Activated B cell treated with CpG ODN at 0.5 μM for 24 hours (primary cell): ENCODE measurements at regions of chr17 and their contacts with region 1.

Region 1: GRCh38 chr17:75632863-75633485 is at the start of gene SMIM5:
- DNase-seq: peak; percentile 83
- ATAC-seq: peak; percentile 89
- H3K4me3 Mint-ChIP-seq: peak within 1 kb of the TSS; percentile 11
- H3K27ac Mint-ChIP-seq: no peak within 1 kb of the TSS
- H3K4me1 Mint-ChIP-seq: peaks cover 13% of the 10 kb centered on the region
- H3K27me3 Mint-ChIP-seq: no peaks in the 10 kb centered on the region
- CTCF ChIP-seq: no peak
- total RNA-seq, gene SMIM5: 1.1 and 1.7 TPM in 2 replicates

Region 2: DNA sequence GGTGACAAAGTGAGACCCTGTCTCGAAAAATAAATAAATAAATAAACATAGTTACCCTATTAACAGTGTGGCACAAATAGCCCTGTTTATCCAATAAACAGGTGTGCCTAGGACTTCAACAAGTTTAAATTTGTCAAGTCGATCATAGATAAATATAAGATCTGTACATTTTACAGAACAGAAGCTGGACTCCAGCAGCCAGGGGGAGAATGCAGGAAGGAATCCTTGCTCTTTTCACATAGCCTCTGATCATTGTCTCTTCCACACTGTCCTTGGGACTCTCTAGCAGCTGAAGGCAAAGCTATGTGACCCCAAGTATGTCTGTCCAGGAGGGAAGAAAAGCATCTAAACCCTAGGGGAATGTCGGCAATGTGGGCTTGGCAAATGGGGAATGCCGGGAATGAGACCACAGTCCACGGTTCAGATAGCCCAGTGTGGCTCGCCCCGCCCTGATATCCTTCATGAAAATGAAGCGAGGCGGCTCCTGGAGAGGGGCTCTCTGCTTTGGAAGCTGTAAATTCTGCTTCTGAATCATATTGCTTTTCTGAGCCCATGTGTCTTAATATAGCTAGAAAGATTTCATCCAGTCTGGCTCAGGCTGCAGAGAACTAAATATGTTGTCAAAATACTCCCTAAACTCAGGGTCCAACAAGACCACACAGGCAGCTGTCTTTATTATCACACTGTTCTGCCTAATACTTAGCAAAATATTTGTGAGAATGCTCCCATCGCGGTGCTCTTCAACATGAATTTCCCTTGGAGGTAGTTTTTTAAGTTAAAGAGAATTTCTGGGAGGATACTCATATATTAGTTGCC is 202.6 kb before region 1 on chr17:
- CTCF ChIA-PET with region 1: interaction called, 8 read pairs
- POLR2A ChIA-PET with region 1: no interaction called
- intact Hi-C with region 1: loop called (anchors 1 kb)
- DNase-seq: no peak
- ATAC-seq: no peak
- H3K4me3 Mint-ChIP-seq: no peak overlapping the region
- H3K27ac Mint-ChIP-seq: no peak overlapping the region
- H3K4me1 Mint-ChIP-seq: peaks cover 10% of the 10 kb centered on the region
- H3K27me3 Mint-ChIP-seq: peaks cover 9% of the 10 kb centered on the region
- CTCF ChIP-seq: no peak

Region 3: GRCh38 chr17:75645889-75646637 is 13.1 kb after region 1 on chr17:
- CTCF ChIA-PET with region 1: interaction called, 72 read pairs
- POLR2A ChIA-PET with region 1: interaction called, 10 read pairs
- intact Hi-C with region 1: no loop called
- DNase-seq: peak; percentile 45
- ATAC-seq: peak; percentile 98
- H3K4me3 Mint-ChIP-seq: peak overlapping the region; percentile 69
- H3K27ac Mint-ChIP-seq: peak overlapping the region; percentile 84
- H3K4me1 Mint-ChIP-seq: peaks cover 15% of the 10 kb centered on the region
- H3K27me3 Mint-ChIP-seq: no peaks in the 10 kb centered on the region
- CTCF ChIP-seq: no peak

Region 4: DNA sequence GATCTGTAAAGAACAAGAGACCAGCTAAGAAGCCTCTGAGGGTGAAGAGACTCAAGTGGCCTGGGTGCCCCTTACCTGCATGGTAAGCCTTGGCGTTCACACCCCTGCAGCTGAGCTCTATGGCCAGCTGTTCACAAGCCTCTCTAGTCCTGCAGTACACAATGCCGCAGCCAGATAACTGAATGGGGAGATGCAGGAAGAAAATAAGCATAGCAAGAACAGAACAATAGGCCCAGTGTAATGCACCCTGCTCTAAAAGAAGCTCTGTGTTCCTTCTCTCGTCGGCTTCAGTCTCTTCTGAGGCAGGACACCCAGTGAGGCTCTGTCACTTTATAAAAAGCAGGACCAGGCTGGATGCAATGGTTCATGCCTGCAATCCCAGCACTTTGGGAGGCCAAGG is 28.6 kb after region 1 on chr17:
- CTCF ChIA-PET with region 1: interaction called, 72 read pairs
- POLR2A ChIA-PET with region 1: interaction called, 9 read pairs
- intact Hi-C with region 1: no loop called
- DNase-seq: no peak
- ATAC-seq: no peak
- H3K4me3 Mint-ChIP-seq: no peak overlapping the region
- H3K27ac Mint-ChIP-seq: peak overlapping the region; percentile 63
- H3K4me1 Mint-ChIP-seq: peaks cover 40% of the 10 kb centered on the region
- H3K27me3 Mint-ChIP-seq: no peaks in the 10 kb centered on the region
- CTCF ChIP-seq: no peak

Region 5: DNA sequence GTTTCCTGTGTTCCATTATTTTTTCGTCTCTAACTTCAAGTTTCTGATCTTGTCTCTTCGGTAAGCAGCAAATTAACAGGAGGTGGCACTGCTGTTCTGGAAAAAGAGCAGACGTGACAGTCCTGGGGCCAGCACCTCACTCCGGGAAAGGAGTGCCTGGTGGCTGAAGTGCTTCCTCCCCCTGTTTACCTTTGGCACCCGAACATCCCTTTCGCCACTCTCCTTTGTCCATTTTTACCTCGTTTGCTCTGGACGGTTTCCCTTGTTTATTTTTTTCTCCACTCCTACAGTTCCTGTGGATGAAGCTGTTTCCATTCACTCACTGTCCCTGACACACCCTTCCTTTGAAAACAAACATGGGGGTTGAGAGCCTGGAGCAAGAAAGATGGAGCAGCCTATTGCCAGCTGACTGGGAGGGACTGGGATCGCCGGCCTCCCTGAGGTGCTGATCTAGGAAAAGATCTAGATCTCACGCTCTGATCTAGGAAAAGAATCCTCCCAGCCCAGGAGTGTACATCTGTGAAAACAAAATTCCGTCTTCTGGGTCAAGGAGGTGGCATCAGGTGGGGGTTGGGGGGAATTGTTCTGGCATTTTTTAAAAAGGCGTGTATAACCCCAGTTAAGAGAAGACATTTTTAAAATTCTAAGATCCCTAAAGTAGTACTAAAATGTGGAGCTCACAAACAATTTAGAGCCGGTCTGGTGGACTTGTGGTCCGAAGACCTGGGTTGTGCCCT is 46.9 kb after region 1 on chr17:
- CTCF ChIA-PET with region 1: interaction called, 9 read pairs
- POLR2A ChIA-PET with region 1: interaction called, 7 read pairs
- intact Hi-C with region 1: loop called (anchors 2 kb)
- DNase-seq: no peak
- ATAC-seq: no peak
- H3K4me3 Mint-ChIP-seq: no peak overlapping the region
- H3K27ac Mint-ChIP-seq: peak overlapping the region; percentile 72
- H3K4me1 Mint-ChIP-seq: peaks cover 37% of the 10 kb centered on the region
- H3K27me3 Mint-ChIP-seq: no peaks in the 10 kb centered on the region
- CTCF ChIP-seq: no peak

Region 6: DNA sequence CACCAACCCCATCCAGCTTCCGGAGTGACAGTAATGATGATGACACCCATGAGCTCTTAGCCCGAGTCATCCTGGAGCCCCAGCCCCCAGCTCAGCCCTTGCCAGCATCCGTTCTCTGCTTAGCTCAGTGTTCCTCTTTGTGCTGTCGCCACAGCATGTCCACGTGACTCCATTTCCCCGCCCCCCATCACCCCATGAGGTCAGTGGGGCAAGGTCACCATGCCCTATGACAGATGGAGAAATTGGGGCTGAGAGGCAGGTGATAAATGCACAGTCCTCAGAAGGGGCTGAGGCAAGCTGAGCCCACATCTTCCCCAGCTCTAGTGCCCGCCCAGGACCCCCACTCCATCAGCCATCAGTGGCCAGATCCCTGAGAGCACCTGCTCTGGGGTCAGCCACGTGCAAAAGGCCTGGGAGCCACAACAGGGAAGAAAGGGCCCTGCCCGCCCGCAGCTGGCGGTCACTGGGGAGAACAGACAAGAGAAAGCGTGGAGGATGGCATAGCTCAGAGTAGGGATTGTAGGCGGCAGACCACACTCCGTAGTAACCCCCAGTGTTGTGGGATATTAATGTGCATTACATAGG is 105.3 kb after region 1 on chr17:
- CTCF ChIA-PET with region 1: interaction called, 25 read pairs
- POLR2A ChIA-PET with region 1: no interaction called
- intact Hi-C with region 1: no loop called
- DNase-seq: no peak
- ATAC-seq: no peak
- H3K4me3 Mint-ChIP-seq: no peak overlapping the region
- H3K27ac Mint-ChIP-seq: peak overlapping the region; percentile 6
- H3K4me1 Mint-ChIP-seq: peaks cover 12% of the 10 kb centered on the region
- H3K27me3 Mint-ChIP-seq: no peaks in the 10 kb centered on the region
- CTCF ChIP-seq: no peak